Panc1 (cell line): ENCODE measurements at regions of chr6 and their contacts with region 1.

Region 1: GRCh38 chr6:131159608-131160007 is 24.3 kb downstream of the AKAP7 start:
- DNase-seq: no peak
- ATAC-seq: peak; percentile 56; the same call in 1 of the 2 replicates
- H3K4me3 ChIP-seq: no peak overlapping the region
- H3K27ac ChIP-seq: no peak overlapping the region
- H3K4me1 ChIP-seq: peaks cover 3% of the 10 kb centered on the region; the same call in 1 of the 2 replicates
- H3K27me3 ChIP-seq: no peaks in the 10 kb centered on the region
- CTCF ChIP-seq: no peak

Region 2: GRCh38 chr6:130259557-130259956 is 900.1 kb before region 1 on chr6:
- CTCF ChIA-PET with region 1: no interaction called
- POLR2A ChIA-PET with region 1: interaction called, 11 read pairs
- in situ Hi-C with region 1: no loop called
- intact Hi-C with region 1: no loop called
- DNase-seq: no peak
- ATAC-seq: no peak
- H3K4me3 ChIP-seq: no peak overlapping the region
- H3K27ac ChIP-seq: no peak overlapping the region
- H3K4me1 ChIP-seq: no peaks in the 10 kb centered on the region
- H3K27me3 ChIP-seq: no peaks in the 10 kb centered on the region
- CTCF ChIP-seq: no peak

Region 3: GRCh38 chr6:130697995-130698535 is 461.5 kb before region 1 on chr6:
- CTCF ChIA-PET with region 1: no interaction called
- POLR2A ChIA-PET with region 1: no interaction called
- in situ Hi-C with region 1: no loop called
- intact Hi-C with region 1: no loop called
- DNase-seq: peak; percentile 10
- ATAC-seq: peak; percentile 90
- H3K4me3 ChIP-seq: no peak overlapping the region
- H3K27ac ChIP-seq: no peak overlapping the region
- H3K4me1 ChIP-seq: no peaks in the 10 kb centered on the region; the same call in 1 of the 2 replicates
- H3K27me3 ChIP-seq: no peaks in the 10 kb centered on the region; the same call in 1 of the 2 replicates
- CTCF ChIP-seq: peak; percentile 80

Region 4: GRCh38 chr6:131083687-131084086 is 75.9 kb before region 1 on chr6:
- CTCF ChIA-PET with region 1: interaction called, 10 read pairs
- POLR2A ChIA-PET with region 1: no interaction called
- in situ Hi-C with region 1: no loop called
- intact Hi-C with region 1: no loop called
- DNase-seq: no peak
- ATAC-seq: no peak
- H3K4me3 ChIP-seq: no peak overlapping the region
- H3K27ac ChIP-seq: no peak overlapping the region
- H3K4me1 ChIP-seq: no peaks in the 10 kb centered on the region
- H3K27me3 ChIP-seq: no peaks in the 10 kb centered on the region
- CTCF ChIP-seq: no peak